Activated T-helper 1 cell treated with anti-CD3 and anti-CD28 coated beads, Interleukin-12 subunit alpha, Interleukin-12 subunit beta, Interleukin-2, Interleukin-4 antibody, amounts not matched to agents 30 ng/mL and 10 ng/mL and 1 ng/mL, durations not matched to agents 14 hours and 24 hours and 36 hours (primary cell): ENCODE measurements at regions of chr1 and their contacts with region 1.

Region 1: GRCh38 chr1:203795441-203796235 is at the starts of genes ZBED6 and ZC3H11A:
- DNase-seq: peak; percentile 99
- H3K4me3 Mint-ChIP-seq: peak within 1 kb of the TSS; percentile 96
- H3K27ac Mint-ChIP-seq: peak within 1 kb of the TSS; percentile 98
- H3K4me1 Mint-ChIP-seq: peaks cover 42% of the 10 kb centered on the region
- H3K27me3 Mint-ChIP-seq: no peaks in the 10 kb centered on the region
- total RNA-seq, gene ZBED6: 19.8 and 21.3 TPM in 2 replicates
- total RNA-seq, gene ZC3H11A: 85.0 and 85.5 TPM in 2 replicates

Region 2: GRCh38 chr1:203290261-203291089 is 505.2 kb before region 1 on chr1:
- intact Hi-C with region 1: loop called (anchors 10 kb)
- DNase-seq: peak; percentile 96
- H3K4me3 Mint-ChIP-seq: peak overlapping the region; percentile 83
- H3K27ac Mint-ChIP-seq: peak overlapping the region; percentile 99
- H3K4me1 Mint-ChIP-seq: peaks cover 89% of the 10 kb centered on the region
- H3K27me3 Mint-ChIP-seq: no peaks in the 10 kb centered on the region

Region 3: GRCh38 chr1:203612932-203613682 is 182.5 kb before region 1 on chr1:
- intact Hi-C with region 1: loop called (anchors 5 kb)
- DNase-seq: no peak
- H3K4me3 Mint-ChIP-seq: no peak overlapping the region
- H3K27ac Mint-ChIP-seq: peak overlapping the region; percentile 74
- H3K4me1 Mint-ChIP-seq: peaks cover 57% of the 10 kb centered on the region
- H3K27me3 Mint-ChIP-seq: no peaks in the 10 kb centered on the region

Region 4: GRCh38 chr1:203861379-203862184 is 65.9 kb after region 1 on chr1 and contains the start of gene SNRPE:
- intact Hi-C with region 1: loop called (anchors 1 kb)
- DNase-seq: peak; percentile 96
- H3K4me3 Mint-ChIP-seq: peak within 1 kb of the TSS; percentile 100
- H3K27ac Mint-ChIP-seq: peak within 1 kb of the TSS; percentile 98
- H3K4me1 Mint-ChIP-seq: peaks cover 25% of the 10 kb centered on the region
- H3K27me3 Mint-ChIP-seq: no peaks in the 10 kb centered on the region
- total RNA-seq, gene SNRPE: 250 and 270 TPM in 2 replicates